Activated CD8-positive, alpha-beta T cell treated with anti-CD3 and anti-CD28 coated beads, Interleukin-2, amount 10 ng/mL, durations not matched to agents 7 days and 5 days (primary cell): ENCODE measurements at regions of chr11 and their contacts with region 1.

Region 1: DNA sequence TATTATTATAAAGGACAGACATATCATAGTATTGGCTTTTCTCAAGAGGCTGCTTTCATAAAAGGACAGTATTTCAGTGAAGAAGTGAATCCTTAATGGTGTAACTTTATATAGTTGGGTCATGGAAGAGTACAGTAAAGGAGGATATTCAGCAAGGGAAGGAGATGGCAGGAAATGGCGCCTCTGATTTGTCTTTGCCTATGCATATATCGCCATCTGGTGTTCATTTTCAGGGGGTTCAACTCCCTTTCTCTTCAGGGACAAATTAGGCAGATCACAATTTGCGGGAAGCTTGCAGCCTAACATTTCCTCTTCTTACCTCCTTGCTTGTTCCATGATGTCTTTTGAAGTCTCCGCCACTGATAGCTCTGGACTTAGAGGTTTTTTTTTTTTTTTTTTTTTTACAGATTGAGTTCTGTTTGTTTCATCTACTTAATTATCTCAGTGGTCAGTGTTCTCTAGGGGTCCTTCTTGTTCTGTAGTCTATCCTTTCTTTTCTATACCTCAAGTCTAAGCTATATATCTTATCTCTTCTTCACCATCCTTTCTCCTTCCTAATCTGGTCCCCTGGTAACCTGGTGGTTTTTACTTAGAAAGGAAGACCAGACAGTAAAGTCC is 21.8 kb upstream of the RRM1 start:
- DNase-seq: peak; percentile 68
- ATAC-seq: peak; percentile 71
- H3K4me3 Mint-ChIP-seq: no peak overlapping the region
- H3K27ac Mint-ChIP-seq: no peak overlapping the region
- H3K4me1 Mint-ChIP-seq: peaks cover 25% of the 10 kb centered on the region
- H3K27me3 Mint-ChIP-seq: no peaks in the 10 kb centered on the region

Region 2: GRCh38 chr11:3834664-3835461 is 237.9 kb before region 1 on chr11:
- CTCF ChIA-PET with region 1: interaction called, 62 read pairs
- POLR2A ChIA-PET with region 1: interaction called, 9 read pairs
- DNase-seq: no peak
- ATAC-seq: no peak
- H3K4me3 Mint-ChIP-seq: peak overlapping the region; percentile 61
- H3K27ac Mint-ChIP-seq: peak overlapping the region; percentile 84
- H3K4me1 Mint-ChIP-seq: peaks cover 86% of the 10 kb centered on the region
- H3K27me3 Mint-ChIP-seq: no peaks in the 10 kb centered on the region

Region 3: DNA sequence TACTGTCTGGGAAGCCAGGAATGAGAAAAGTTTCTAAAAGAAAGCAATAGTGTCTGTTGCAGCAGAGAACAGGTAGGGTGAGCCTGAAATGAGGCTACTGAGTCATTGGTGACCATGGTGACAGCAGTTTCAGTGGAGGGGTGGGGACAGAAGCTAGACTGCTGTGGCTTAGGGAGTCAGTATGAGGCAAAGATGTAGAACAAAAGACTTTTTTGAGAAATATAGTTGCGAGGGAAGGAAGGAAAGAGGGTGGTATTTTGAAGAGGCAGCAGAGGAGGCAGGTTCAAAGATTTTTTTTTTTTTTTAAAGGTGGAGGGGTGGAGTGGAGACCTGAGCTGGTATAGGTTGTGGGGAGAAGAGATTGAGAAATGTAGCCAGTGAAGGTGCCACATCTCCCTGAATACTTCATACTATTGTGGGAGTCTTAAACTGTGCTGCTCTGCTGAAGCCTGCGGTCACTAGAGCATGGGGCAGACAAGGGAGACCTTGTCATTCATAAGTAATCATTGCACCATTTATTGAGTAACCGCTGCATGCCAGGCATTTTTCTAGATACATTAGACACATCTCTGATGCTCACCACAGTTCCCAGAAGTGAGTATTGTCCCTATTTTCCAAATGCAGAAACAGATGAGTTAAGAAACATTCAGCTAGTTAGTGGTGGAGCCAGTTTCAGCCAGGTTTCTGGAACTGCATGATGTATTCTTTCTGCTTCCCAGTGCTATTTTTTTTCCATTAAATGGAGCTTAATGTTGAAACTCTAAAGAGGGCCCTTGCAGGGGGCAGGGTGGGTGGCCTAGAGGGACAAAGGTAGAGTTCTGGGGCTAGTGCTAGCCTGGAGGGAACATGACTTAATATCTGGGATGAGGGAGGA is 167.5 kb before region 1 on chr11:
- CTCF ChIA-PET with region 1: interaction called, 14 read pairs
- POLR2A ChIA-PET with region 1: no interaction called
- DNase-seq: peak; percentile 79
- ATAC-seq: peak; percentile 96
- H3K4me3 Mint-ChIP-seq: no peak overlapping the region
- H3K27ac Mint-ChIP-seq: peak overlapping the region; percentile 66
- H3K4me1 Mint-ChIP-seq: peaks cover 70% of the 10 kb centered on the region
- H3K27me3 Mint-ChIP-seq: no peaks in the 10 kb centered on the region

Region 4: GRCh38 chr11:3959015-3959919 is 113.5 kb before region 1 on chr11:
- CTCF ChIA-PET with region 1: interaction called, 14 read pairs
- POLR2A ChIA-PET with region 1: no interaction called
- DNase-seq: no peak
- ATAC-seq: no peak
- H3K4me3 Mint-ChIP-seq: no peak overlapping the region
- H3K27ac Mint-ChIP-seq: no peak overlapping the region
- H3K4me1 Mint-ChIP-seq: peaks cover 67% of the 10 kb centered on the region
- H3K27me3 Mint-ChIP-seq: no peaks in the 10 kb centered on the region

Region 5: GRCh38 chr11:4041731-4042391 is 30.9 kb before region 1 on chr11:
- CTCF ChIA-PET with region 1: interaction called, 10 read pairs
- POLR2A ChIA-PET with region 1: no interaction called
- DNase-seq: no peak
- ATAC-seq: no peak
- H3K4me3 Mint-ChIP-seq: no peak overlapping the region
- H3K27ac Mint-ChIP-seq: no peak overlapping the region
- H3K4me1 Mint-ChIP-seq: peaks cover 16% of the 10 kb centered on the region
- H3K27me3 Mint-ChIP-seq: no peaks in the 10 kb centered on the region

Region 6: GRCh38 chr11:4154503-4154902 is 81.7 kb after region 1 on chr11:
- CTCF ChIA-PET with region 1: no interaction called
- POLR2A ChIA-PET with region 1: no interaction called
- DNase-seq: no peak
- ATAC-seq: no peak
- H3K4me3 Mint-ChIP-seq: no peak overlapping the region
- H3K27ac Mint-ChIP-seq: no peak overlapping the region
- H3K4me1 Mint-ChIP-seq: no peaks in the 10 kb centered on the region
- H3K27me3 Mint-ChIP-seq: no peaks in the 10 kb centered on the region